K562 (cell line): ENCODE measurements at regions of chr17 and their contacts with region 1.

Region 1: DNA sequence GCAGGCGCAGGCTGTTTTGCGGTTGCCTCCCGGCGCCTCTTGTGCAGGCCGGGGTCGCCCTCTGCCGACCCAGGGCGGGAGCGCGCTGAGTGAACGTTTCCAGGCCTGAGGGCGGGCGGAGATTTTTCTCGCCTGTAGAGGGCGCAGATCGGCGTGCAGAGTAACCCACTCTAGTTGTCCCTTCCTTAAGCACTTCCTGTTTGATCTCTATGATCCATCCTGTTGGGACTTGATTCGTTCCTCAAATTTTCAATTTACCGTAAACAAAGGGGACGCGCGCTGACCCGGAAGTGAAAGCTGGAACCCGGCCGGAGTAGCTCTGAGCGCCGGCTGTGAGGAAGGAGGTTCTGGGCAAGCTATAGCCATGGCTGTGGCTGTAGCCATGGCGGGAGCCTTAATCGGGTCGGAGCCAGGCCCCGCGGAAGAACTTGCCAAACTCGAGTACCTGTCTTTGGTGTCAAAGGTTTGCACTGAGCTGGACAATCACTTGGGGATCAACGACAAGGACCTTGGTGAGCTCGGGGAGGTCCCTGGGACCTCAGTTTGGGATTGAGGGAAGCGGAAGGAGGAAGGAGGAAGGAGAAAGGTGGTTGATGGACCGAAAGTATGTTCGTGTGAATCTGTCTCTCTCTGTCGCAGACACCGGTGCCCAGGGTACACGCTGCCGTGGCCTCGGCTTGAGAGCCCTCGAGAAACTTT is at the start of gene DHX8:
- DNase-seq: peak; percentile 91 to 97 (median 94)
- ATAC-seq: peak; percentile 98
- H3K4me3 ChIP-seq: peak within 1 kb of the TSS; percentile 62
- H3K27ac ChIP-seq: peak within 1 kb of the TSS; percentile 79
- H3K4me1 ChIP-seq: peaks cover 3 to 4% of the 10 kb centered on the region in 2 experiments; a peak in 3 of 5 replicates
- H3K27me3 ChIP-seq: no peaks in the 10 kb centered on the region
- CTCF ChIP-seq: peak; percentile 100
- EP300 ChIP-seq: peak; percentile 63
- POLR2A ChIP-seq: peak; percentile 95
- RAD21 ChIP-seq: peak; percentile 99 to 100
- polyA plus RNA-seq, gene DHX8: 23.1 to 24.5 TPM

Region 2: DNA sequence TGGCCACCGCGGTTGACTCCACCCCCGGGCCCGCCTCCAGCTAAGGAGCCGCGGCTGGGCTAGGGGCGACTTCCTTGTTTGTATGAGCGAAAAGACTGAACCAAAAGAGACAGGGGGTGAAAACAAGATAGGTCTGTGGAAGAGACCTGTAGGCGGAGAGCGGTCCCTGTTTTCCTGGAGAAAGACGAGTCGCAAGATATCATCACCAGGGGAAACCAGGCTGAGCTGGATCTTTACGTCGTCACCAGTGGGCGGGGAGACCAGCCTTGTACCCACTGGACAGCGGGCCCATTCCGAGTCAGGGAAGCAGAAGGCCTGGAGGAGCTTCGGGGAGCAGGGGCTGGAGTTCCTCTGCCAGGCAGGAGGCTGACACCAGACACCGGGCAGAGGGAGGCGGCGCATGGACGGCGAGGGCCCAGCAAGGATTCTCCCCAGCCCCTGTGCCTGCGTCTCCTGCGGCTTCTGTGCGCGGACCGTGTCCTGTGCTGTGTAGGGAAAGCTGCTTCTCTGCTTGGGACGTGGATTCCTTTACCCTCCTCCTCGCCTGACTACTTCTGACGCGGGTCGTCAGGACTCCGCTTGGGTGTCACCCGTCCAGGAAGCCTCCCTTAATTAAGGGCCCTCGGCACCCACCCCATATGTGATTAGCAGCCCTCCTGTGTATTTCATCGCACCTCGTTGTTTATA is 95.3 kb before region 1 on chr17:
- CTCF ChIA-PET with region 1: interaction called, 181 read pairs
- POLR2A ChIA-PET with region 1: interaction called, 6 read pairs
- in situ Hi-C with region 1: loop called (anchors 5 kb)
- intact Hi-C with region 1: loop called (anchors 1 kb)
- DNase-seq: peak; percentile 77 to 89 (median 82)
- ATAC-seq: peak; percentile 94
- H3K4me3 ChIP-seq: peak overlapping the region; percentile 42
- H3K27ac ChIP-seq: peak overlapping the region; percentile 86
- H3K4me1 ChIP-seq: peaks cover 5 to 12% of the 10 kb centered on the region in 2 experiments; a peak in 2 of 5 replicates
- H3K27me3 ChIP-seq: no peaks in the 10 kb centered on the region
- CTCF ChIP-seq: no peak
- EP300 ChIP-seq: no peak
- POLR2A ChIP-seq: peak; percentile 81
- RAD21 ChIP-seq: no peak

Region 3: DNA sequence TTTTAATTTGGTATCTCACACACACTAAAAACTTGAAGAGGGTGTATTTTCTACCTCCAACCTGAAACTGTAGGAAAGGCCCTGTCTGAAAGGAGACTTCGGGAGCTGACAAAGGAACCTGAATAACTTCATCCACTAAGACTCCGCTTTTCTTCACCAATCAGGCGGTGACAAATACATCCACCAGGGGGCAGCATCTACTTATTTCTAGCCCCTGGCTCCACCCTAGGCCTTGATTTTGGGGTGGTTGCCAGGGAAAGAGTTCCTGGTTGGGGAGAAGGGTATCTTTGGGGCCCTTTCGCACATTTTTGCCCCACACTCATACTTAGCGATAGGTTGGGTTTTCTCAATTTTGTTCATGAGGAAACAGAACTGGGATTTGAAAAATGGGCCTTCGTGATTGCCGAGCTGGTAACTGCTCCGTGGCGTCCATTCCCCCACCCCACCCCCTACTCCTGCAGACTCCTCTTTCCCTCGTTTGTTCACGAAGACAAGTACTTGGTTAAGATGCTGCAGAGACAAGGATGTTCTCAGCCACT is 89.8 kb before region 1 on chr17:
- CTCF ChIA-PET with region 1: interaction called, 181 read pairs
- POLR2A ChIA-PET with region 1: interaction called, 5 read pairs
- in situ Hi-C with region 1: loop called (anchors 5 kb)
- intact Hi-C with region 1: loop called (anchors 1 kb)
- DNase-seq: peak; percentile 83 to 87 (median 84)
- ATAC-seq: peak; percentile 81
- H3K4me3 ChIP-seq: no peak overlapping the region
- H3K27ac ChIP-seq: no peak overlapping the region
- H3K4me1 ChIP-seq: peaks cover 9 to 13% of the 10 kb centered on the region in 2 experiments; a peak in 4 of 5 replicates
- H3K27me3 ChIP-seq: no peaks in the 10 kb centered on the region
- CTCF ChIP-seq: peak; percentile 90 to 97 (median 93)
- EP300 ChIP-seq: peak; percentile 40; the same call in 1 of the 2 replicates
- POLR2A ChIP-seq: no peak
- RAD21 ChIP-seq: peak; percentile 97 to 98

Region 4: DNA sequence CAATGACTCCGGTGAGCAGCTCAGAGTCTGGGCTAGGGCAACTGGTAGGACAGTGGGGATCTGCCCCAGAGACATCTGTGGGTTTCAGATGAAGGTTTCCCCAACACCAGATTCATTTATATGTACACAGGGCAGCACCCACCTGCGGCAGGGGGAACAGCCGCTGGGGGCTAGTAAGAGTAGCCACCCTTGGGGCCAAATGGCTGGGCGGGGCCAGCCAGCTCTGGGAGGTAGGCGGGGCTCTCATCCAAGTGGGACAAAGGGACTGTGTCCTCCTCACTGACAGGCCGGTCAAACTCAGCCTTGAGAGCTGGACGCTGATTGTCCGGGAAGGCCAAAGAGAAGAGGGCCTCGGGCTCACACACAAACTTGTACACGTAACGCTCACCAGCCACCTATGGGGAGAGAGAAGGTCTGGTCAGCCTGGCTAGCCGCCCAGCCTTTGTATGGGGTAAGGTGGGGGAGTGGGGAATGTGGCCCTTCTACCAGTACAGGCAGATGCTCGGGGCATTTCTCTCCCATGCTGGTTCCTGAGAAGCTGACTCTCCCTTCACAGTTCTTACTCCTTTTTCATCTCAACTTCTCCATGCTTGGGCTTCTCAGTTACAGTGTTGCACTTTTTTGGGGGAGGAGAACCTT is 44.6 kb after region 1 on chr17:
- CTCF ChIA-PET with region 1: no interaction called
- POLR2A ChIA-PET with region 1: no interaction called
- in situ Hi-C with region 1: no loop called
- intact Hi-C with region 1: no loop called
- DNase-seq: peak in 3 of 4 experiments; percentile 31 to 40 (median 38)
- ATAC-seq: peak; percentile 49
- H3K4me3 ChIP-seq: no peak overlapping the region
- H3K27ac ChIP-seq: 0 out of 3 replicates have a peak overlapping the region, but pooled peaks have one; percentile 10
- H3K4me1 ChIP-seq: peaks cover 22 to 26% of the 10 kb centered on the region in 2 experiments
- H3K27me3 ChIP-seq: no peaks in the 10 kb centered on the region
- CTCF ChIP-seq: no peak
- EP300 ChIP-seq: no peak
- POLR2A ChIP-seq: 0 out of 2 replicates have a peak, but pooled peaks have one; percentile 14
- RAD21 ChIP-seq: no peak

Region 5: GRCh38 chr17:44014437-44015172 is 530.8 kb after region 1 on chr17 and contains the start of gene TMEM101:
- CTCF ChIA-PET with region 1: no interaction called
- POLR2A ChIA-PET with region 1: no interaction called
- in situ Hi-C with region 1: no loop called
- intact Hi-C with region 1: no loop called
- DNase-seq: peak; percentile 93 to 96 (median 94)
- ATAC-seq: peak; percentile 96
- H3K4me3 ChIP-seq: peak within 1 kb of the TSS; percentile 72
- H3K27ac ChIP-seq: peak within 1 kb of the TSS; percentile 78
- H3K4me1 ChIP-seq: peaks cover 9 to 20% of the 10 kb centered on the region in 2 experiments; a peak in 4 of 5 replicates
- H3K27me3 ChIP-seq: no peaks in the 10 kb centered on the region
- CTCF ChIP-seq: 0 out of 6 replicates have a peak, but pooled peaks of 1 of the 3 experiments have one; percentile 10
- EP300 ChIP-seq: peak; percentile 63
- POLR2A ChIP-seq: peak; percentile 87
- RAD21 ChIP-seq: no peak; a peak in 1 of 4 replicates
- polyA plus RNA-seq, gene TMEM101: 79.4 to 110 TPM